Gastrocnemius medialis (tissue), 4 donors: ENCODE measurements at regions of chr12 and their contacts with region 1.

Region 1: GRCh38 chr12:57276935-57277563 is 26.1 kb upstream of the STAC3 start:
- DNase-seq: no peak
- ATAC-seq: no peak
- H3K4me3 ChIP-seq: no peak overlapping the region
- H3K27ac ChIP-seq: no peak overlapping the region
- H3K4me1 ChIP-seq: peaks cover 9 to 12% of the 10 kb centered on the region in 2 donors
- H3K27me3 ChIP-seq: no peaks in the 10 kb centered on the region
- CTCF ChIP-seq: peak in 4 of 5 experiments; percentile 20 to 62 (median 44)
- POLR2A ChIP-seq: no peak

Region 2: DNA sequence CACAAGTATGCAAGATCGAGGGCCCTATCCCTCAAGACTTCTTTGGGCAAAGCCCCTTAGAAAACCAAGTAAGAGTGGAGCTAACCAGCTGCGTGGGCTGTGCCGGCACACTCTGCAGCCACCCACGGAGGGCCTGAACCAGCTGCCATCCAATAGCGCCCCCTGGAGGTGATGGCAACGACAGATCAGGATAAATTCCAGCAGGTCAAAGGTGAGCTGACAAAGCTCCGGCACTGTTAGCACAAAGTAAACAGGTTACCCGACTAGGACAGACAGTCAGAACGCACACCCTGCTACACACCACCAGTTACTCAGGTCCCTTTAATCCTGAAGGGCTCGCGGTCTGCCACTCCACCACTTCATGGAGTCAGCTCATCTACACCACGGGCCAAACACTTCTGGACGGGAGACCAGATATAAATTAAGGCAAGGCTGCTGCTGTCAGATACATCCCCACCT is 275.6 kb before region 1 on chr12:
- in situ Hi-C with region 1: no loop called
- intact Hi-C with region 1: no loop called
- DNase-seq: peak in 1 of 2 donors; percentile 30
- ATAC-seq: no peak
- H3K4me3 ChIP-seq: no peak overlapping the region
- H3K27ac ChIP-seq: no peak overlapping the region
- H3K4me1 ChIP-seq: peaks cover 15 to 16% of the 10 kb centered on the region in 2 donors
- H3K27me3 ChIP-seq: no peaks in the 10 kb centered on the region
- CTCF ChIP-seq: peak in 4 of 5 experiments; percentile 44 to 60 (median 54)
- POLR2A ChIP-seq: no peak

Region 3: DNA sequence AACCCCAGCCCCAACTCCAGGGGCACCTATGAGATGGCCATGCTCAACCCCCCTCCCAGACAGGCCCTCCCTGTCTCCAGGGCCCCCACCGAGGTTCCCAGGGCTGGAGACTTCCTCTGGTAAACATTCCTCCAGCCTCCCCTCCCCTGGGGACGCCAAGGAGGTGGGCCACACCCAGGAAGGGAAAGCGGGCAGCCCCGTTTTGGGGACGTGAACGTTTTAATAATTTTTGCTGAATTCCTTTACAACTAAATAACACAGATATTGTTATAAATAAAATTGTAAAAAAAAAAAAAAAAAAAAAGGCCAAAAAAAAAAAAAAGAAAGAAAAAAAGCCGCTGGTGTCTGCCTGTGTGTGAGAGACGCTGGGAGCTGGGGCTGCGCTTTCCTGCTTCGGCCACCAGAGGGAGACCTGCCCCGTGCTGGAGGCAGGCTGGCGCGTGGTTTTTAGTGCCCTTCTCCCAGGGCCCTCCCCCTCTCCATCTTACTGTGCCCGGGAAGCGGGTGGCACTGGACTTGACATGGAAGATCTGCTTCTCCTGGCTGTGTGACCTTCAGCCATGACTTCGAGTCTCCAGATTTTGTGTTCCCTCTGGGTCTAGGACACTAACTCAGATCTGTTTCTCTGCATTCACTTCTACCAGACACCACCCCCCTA is 63.9 kb before region 1 on chr12:
- in situ Hi-C with region 1: no loop called
- intact Hi-C with region 1: loop called (anchors 2 kb)
- DNase-seq: peak; percentile 72 to 85
- ATAC-seq: peak; percentile 75 to 78
- H3K4me3 ChIP-seq: no peak overlapping the region
- H3K27ac ChIP-seq: no peak overlapping the region
- H3K4me1 ChIP-seq: peaks cover 6 to 23% of the 10 kb centered on the region in 2 donors
- H3K27me3 ChIP-seq: peaks cover 30 to 35% (median 34%) of the 10 kb centered on the region in 3 donors
- CTCF ChIP-seq: peak; percentile 78 to 98 (median 91)
- POLR2A ChIP-seq: no peak

Region 4: GRCh38 chr12:57430931-57431720 is 154.1 kb after region 1 on chr12 and contains the start of gene R3HDM2:
- in situ Hi-C with region 1: loop called in 1 of 4 experiments (anchors 25 kb)
- intact Hi-C with region 1: no loop called
- DNase-seq: peak; percentile 93 to 95
- ATAC-seq: peak; percentile 96 to 98
- H3K4me3 ChIP-seq: peak within 1 kb of the TSS; percentile 66 to 92 (median 70)
- H3K27ac ChIP-seq: peak within 1 kb of the TSS; percentile 91 to 95 (median 95)
- H3K4me1 ChIP-seq: peaks cover 6 to 14% of the 10 kb centered on the region in 2 donors
- H3K27me3 ChIP-seq: no peaks in the 10 kb centered on the region
- CTCF ChIP-seq: no peak
- POLR2A ChIP-seq: peak; percentile 93
- total RNA-seq, gene R3HDM2: 24.1 to 27.1 (median 25.6) TPM